HEK293T (cell line): ENCODE measurements at regions of chr2 and their contacts with region 1.

Region 1: GRCh38 chr2:174503161-174503809 is 16.5 kb upstream of the GPR155 start:
- DNase-seq: no peak

Region 2: GRCh38 chr2:174412256-174412655 is 91.0 kb before region 1 on chr2:
- CTCF ChIA-PET with region 1: no interaction called
- POLR2A ChIA-PET with region 1: no interaction called
- DNase-seq: no peak

Region 3: DNA sequence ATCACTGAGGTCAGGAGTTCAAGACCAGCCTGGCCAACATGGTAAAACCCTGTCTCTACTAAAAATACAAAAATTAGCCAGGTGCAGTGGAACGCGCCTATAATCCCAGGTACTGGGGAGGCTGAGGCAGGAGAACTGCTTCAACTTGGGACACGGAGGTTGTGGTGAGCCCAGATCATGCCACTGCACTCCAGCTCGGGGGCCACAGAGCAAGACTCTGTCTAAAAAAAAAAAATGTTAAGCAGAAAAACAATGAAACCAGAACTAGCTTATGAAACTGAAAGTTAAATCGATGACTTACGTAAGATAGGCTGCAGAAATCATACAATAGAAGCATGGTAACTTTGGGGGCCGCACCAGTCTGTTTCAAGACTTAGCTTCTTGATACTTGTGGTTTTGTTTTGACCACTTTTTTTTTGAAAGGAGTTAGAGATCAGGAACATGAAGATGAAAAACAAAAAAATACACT is 10.3 kb before region 1 on chr2:
- CTCF ChIA-PET with region 1: no interaction called
- POLR2A ChIA-PET with region 1: no interaction called
- DNase-seq: no peak

Region 4: DNA sequence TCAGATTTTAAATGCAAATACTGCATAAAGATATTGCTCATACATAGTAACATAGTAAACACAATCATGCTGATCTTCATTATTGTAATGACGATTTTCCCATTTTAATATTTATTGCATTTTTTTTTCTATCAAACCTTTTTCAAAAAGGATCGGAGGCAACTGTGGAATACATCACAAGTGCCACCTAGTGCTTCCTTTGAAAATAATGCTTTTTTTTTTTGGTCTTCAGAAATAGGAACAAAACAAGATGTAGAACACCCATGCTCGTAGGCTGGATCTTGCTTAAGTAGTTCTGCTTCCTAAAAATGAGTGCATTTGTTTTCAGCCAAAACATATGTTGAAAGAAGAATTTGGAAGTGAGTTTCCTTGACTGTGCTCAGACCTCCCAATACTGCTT is 19.3 kb after region 1 on chr2:
- CTCF ChIA-PET with region 1: interaction called, 11 read pairs
- POLR2A ChIA-PET with region 1: no interaction called
- DNase-seq: no peak